Lower leg skin (tissue), 4 donors: ENCODE measurements at regions of chr20 and their contacts with region 1.

Region 1: GRCh38 chr20:47272893-47273590 is 83.5 kb downstream of the ZMYND8 start:
- DNase-seq: peak; percentile 60 to 69
- H3K4me3 ChIP-seq: no peak overlapping the region
- CTCF ChIP-seq: no peak
- POLR2A ChIP-seq: no peak

Region 2: GRCh38 chr20:46562373-46563169 is 710.5 kb before region 1 on chr20:
- intact Hi-C with region 1: no loop called
- DNase-seq: peak; percentile 69 to 92
- H3K4me3 ChIP-seq: no peak overlapping the region
- CTCF ChIP-seq: peak in 1 of 3 donors; percentile 94
- POLR2A ChIP-seq: no peak

Region 3: DNA sequence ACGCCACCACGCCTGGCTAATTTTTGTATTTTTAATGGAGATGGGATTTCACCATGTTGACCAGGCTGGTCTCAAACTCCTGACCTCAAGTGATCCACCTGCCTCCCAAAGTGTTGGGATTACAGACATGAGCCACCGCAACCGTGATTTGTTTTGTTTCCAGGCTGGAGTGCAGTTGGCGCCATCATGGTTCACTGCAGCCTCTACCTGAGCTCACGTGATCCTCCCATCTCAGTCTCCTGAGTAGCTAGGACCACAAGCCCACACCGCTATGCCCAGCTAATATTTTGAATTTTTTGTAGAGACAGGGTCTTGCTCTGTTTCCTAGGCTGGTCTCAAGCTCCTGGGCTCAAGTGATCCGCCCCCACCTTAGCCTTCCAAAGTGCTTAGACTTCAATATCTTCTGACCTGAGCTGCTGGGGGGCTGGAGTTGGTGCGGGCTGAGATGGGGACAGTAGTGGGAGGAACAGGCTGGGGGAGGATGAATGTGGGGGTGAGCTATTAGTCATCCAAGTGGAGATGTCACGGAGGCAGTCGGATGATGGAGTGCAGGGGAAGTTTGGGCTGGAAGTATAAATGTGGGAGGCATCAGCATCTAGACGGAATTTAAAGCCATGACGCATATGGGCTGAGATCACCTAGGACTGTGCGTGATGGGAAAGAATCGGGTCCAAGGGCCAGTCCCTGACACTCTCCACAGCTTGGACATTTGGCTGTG is 106.5 kb after region 1 on chr20:
- intact Hi-C with region 1: loop called (anchors 5 kb)
- DNase-seq: no peak
- H3K4me3 ChIP-seq: no peak overlapping the region
- CTCF ChIP-seq: no peak
- POLR2A ChIP-seq: no peak